ENCODE measurements at regions of chr19 and their contacts with region 1.

Region 1: GRCh38 chr19:32594021-32594420 is 13.0 kb downstream of the PDCD5 start:
- DNase-seq: no peak
- H3K4me3 ChIP-seq: no peak overlapping the region
- H3K27ac ChIP-seq: no peak overlapping the region
- H3K4me1 ChIP-seq: no peaks in the 10 kb centered on the region
- H3K27me3 ChIP-seq: no peaks in the 10 kb centered on the region
- CTCF ChIP-seq: no peak
- EP300 ChIP-seq: no peak
- POLR2A ChIP-seq: no peak
- RAD21 ChIP-seq: no peak

Region 2: DNA sequence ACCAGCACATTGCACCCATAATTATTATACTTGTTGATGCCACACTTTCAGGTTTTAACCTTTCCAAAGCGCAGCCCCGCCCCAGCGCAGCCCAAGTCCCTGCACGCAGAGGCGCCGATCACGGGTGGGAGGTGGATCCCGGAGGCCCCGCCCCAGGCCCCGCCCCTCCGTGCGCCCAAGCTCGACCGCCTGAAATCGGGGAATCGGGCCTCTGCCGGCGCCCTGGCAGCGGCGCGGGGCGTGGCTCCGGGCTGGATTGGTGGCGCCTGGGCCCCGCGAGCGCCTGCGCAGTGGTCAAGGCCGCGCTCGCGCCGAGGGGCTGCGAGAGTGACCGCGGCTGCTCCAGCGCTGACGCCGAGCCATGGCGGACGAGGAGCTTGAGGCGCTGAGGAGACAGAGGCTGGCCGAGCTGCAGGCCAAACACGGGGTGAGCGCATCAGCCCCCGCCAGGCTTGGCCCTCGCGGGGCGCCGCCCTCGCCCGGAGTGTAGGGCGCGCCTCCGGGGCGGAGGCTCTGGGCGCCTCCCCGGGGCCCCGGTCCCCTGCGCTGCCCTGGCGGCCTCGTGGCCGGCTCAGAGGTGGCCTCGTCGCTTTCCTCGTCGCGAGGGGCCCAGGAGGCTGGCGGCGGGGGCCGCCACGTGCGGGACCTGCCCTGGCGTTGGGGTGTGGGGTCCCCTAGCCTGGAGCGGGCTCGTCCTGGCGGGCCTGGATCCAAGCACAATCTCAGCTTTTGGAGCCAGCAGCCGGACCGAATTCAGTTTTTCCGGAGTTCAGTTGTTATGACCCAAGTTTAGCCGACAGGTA is 12.9 kb before region 1 on chr19 and contains the start of gene PDCD5:
- CTCF ChIA-PET with region 1: interaction called, 3 read pairs
- POLR2A ChIA-PET with region 1: interaction called, 10 read pairs
- DNase-seq: peak; percentile 34 to 88
- H3K4me3 ChIP-seq: peak within 1 kb of the TSS; percentile 70 to 92 (median 83)
- H3K27ac ChIP-seq: peak within 1 kb of the TSS; percentile 70; the same call in 1 of the 2 replicates
- H3K4me1 ChIP-seq: peaks cover 0 to 6% (median 0%) of the 10 kb centered on the region in 4 experiments; a peak in 2 of 7 replicates
- H3K27me3 ChIP-seq: peaks cover 0 to 2% (median 0%) of the 10 kb centered on the region in 4 experiments; a peak in 4 of 7 replicates
- CTCF ChIP-seq: no peak
- EP300 ChIP-seq: no peak
- POLR2A ChIP-seq: peak; percentile 71 to 87
- RAD21 ChIP-seq: no peak
- total RNA-seq, gene PDCD5: 98.8 and 105 TPM in 2 replicates

Measured in H1 (cell line).